T-cell (primary cell): ENCODE measurements at regions of chr2 and their contacts with region 1.

Region 1: DNA sequence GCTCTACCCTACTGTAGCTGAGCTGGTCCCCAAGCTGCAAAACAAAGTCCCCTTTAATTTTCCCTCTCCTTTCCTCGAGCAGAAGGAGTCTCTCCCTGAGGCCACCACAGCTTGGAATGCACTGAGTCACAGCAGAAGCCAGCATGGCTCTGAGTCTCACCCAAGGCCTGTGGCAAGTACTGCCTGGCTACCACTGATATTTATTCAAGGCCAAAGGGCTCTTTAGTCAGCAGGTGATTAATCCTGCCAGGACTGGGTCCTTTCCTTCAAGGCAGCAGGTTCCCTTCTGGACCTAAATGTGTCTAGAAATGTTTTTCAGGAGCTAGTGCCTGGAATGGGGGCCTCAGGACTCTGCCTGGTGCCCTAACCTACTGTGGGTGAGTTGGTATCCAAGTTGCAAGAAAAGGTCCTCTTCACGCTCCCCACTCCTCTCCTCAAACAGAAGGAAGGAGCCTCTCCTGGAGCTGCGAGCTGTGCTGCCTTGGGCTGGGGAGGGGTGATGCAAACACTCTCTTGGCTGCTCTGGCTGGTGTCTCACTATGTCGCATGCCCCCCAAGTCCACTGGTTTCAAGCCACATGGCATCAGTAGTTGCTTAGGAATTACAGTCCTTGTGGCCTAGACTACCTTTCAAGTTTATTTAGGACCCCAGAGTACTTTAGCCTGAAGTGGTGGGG is 53.4 kb downstream of the CD28 start:
- DNase-seq: no peak
- ATAC-seq: no peak
- H3K4me3 ChIP-seq: no peak overlapping the region
- H3K4me3 Mint-ChIP-seq: no peak overlapping the region
- H3K27ac ChIP-seq: no peak overlapping the region
- H3K27ac Mint-ChIP-seq: peak overlapping the region; percentile 34 to 46
- H3K4me1 ChIP-seq: peaks cover 21 to 23% of the 10 kb centered on the region in 2 experiments
- H3K4me1 Mint-ChIP-seq: peaks cover 57 to 64% (median 58%) of the 10 kb centered on the region in 3 donors
- H3K27me3 ChIP-seq: no peaks in the 10 kb centered on the region
- H3K27me3 Mint-ChIP-seq: no peaks in the 10 kb centered on the region

Region 2: DNA sequence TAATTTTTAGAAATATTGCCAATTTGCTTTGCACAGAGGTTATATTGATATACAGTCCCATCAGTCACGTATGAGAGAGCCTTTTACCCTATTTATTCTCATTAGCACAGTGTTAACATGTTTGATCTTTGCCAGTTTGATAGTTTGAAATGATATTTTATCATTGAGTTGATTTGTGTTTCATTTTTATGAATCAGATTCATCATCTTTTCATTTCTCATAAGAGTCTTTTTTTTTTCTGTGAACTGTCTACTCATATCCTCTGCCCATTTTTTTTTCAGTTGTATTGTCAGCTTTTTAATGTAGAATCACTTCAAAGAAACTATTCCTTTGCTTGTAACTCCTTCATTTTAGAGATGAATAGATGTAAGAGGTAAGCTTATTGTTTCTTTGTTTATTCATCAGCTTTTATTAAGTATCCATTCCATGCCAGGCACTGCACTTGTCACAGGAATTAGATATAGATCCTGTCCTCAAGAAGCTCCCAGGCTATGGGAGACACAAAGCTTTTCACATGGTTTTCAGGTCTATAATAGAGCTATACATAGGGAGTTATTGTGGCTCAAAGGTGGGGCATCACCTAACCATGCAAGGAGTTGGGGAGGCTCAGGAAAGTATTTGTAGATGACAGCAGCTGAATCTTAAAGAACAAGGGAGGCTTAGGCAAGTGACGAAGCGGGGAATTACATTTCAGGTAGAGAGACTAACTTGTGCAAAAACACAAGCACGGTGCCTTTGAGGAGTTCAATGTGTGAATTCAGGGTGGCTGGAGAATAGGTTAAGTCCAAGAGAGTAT is 11.3 kb before region 1 on chr2:
- CTCF ChIA-PET with region 1: interaction called in 1 of 2 experiments, 10 read pairs
- POLR2A ChIA-PET with region 1: interaction called, 3 read pairs
- DNase-seq: peak in 2 of 35 experiments; percentile 7 to 43
- ATAC-seq: peak; percentile 28 to 77 (median 41)
- H3K4me3 ChIP-seq: no peak overlapping the region
- H3K4me3 Mint-ChIP-seq: peak overlapping the region in 1 of 3 donors; percentile 7
- H3K27ac ChIP-seq: peak overlapping the region; percentile 34
- H3K27ac Mint-ChIP-seq: peak overlapping the region; percentile 79 to 85
- H3K4me1 ChIP-seq: peaks cover 23 to 31% of the 10 kb centered on the region in 2 experiments
- H3K4me1 Mint-ChIP-seq: peaks cover 67 to 72% (median 70%) of the 10 kb centered on the region in 3 donors
- H3K27me3 ChIP-seq: no peaks in the 10 kb centered on the region
- H3K27me3 Mint-ChIP-seq: no peaks in the 10 kb centered on the region